Activated CD8-positive, alpha-beta T cell treated with anti-CD3 and anti-CD28 coated beads for 36 hours (primary cell): ENCODE measurements at regions of chr11 and their contacts with region 1.

Region 1: DNA sequence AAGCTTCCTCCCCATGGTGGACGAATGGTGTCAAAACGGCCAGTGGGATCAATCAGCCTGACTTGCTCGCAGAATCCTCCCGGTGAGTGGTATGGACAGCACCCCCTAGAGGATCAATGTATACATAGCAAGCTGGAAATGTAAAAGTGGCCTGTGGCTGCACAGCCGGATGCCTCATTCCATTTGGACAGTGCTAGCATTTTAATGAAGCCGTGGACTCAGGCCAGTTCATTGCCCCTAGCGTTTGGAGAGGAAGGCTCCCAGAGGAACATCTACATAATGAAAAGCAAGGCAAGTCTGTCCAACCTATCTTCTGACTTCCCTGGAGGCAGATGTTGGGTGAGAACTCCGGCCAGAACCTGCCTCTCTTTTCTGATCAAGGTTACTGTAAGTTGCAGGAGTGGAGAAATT is 942.3 kb downstream of the NTM start:
- DNase-seq: peak; percentile 4
- ATAC-seq: peak; percentile 37
- H3K4me3 Mint-ChIP-seq: no peak overlapping the region
- H3K27ac Mint-ChIP-seq: no peak overlapping the region
- H3K4me1 Mint-ChIP-seq: no peaks in the 10 kb centered on the region
- H3K27me3 Mint-ChIP-seq: no peaks in the 10 kb centered on the region
- CTCF ChIP-seq: peak; percentile 20

Region 2: DNA sequence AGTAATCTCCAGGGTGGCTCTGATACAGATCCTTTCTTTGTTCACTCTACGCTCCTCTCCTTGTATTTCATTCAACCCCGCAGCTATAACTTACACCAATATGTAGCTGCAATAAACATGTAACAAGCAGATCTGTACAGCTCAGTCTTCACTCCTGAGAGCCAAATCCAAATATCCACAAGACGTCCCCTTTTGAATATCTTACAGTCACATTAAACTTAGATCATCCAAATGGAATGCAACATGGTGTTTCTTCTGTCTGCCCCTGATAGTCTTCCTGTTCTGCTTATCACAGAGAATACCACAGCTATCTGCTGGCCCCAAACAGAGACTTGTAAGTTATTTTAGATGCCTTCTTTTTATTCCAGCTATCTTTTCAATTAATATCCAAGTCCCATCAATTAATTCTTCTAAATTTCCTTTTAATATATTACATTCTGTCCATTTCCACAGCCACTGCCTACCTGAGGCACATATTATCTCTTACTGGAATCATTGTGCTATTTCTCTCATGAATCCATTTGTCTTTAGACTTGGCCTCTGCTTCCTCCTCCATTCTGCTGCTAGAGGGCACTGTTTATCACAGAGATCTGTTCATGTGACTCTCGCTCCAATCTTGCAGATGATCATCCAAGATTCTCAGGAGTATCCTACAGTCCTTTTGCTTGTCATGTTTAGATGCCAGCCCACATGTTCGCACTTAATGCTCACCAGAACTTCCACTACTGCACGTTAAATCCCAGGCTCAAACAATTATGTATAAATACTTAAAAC is 33.7 kb before region 1 on chr11:
- CTCF ChIA-PET with region 1: interaction called, 11 read pairs
- POLR2A ChIA-PET with region 1: no interaction called
- intact Hi-C with region 1: no loop called
- DNase-seq: no peak
- ATAC-seq: no peak
- H3K4me3 Mint-ChIP-seq: no peak overlapping the region
- H3K27ac Mint-ChIP-seq: no peak overlapping the region
- H3K4me1 Mint-ChIP-seq: no peaks in the 10 kb centered on the region
- H3K27me3 Mint-ChIP-seq: no peaks in the 10 kb centered on the region
- CTCF ChIP-seq: no peak

Region 3: GRCh38 chr11:132301900-132302299 is 10.8 kb before region 1 on chr11:
- CTCF ChIA-PET with region 1: interaction called, 19 read pairs
- POLR2A ChIA-PET with region 1: no interaction called
- intact Hi-C with region 1: no loop called
- DNase-seq: no peak
- ATAC-seq: no peak
- H3K4me3 Mint-ChIP-seq: no peak overlapping the region
- H3K27ac Mint-ChIP-seq: no peak overlapping the region
- H3K4me1 Mint-ChIP-seq: no peaks in the 10 kb centered on the region
- H3K27me3 Mint-ChIP-seq: no peaks in the 10 kb centered on the region
- CTCF ChIP-seq: no peak

Region 4: DNA sequence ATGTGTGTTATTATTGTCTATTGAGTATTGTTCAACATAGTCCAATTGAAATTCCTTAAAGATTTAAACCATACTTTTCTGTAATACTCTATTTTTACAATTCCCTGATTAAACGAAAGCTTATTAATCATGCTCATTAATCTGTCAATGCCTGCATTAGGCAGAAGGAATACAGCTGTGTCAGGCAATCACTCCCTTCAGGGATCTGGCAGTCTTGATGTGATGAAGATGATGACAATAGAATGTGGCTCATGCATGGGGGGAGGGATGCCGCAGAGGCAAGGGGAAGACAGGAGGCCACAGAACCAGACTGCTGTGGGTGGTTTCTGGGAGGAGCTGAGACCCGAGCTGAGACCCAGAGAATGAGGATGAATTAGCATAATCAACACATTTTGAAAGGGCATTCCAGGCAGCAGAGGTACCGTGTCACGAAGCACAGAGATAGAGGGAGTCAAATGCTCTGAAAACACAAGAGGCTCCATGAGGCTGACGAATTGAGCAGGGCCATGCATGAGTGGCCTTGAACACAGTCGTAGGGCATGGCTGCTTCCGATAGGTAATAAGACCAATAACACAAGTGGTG is 144.1 kb after region 1 on chr11:
- CTCF ChIA-PET with region 1: no interaction called
- POLR2A ChIA-PET with region 1: no interaction called
- intact Hi-C with region 1: no loop called
- DNase-seq: no peak
- ATAC-seq: no peak
- H3K4me3 Mint-ChIP-seq: no peak overlapping the region
- H3K27ac Mint-ChIP-seq: no peak overlapping the region
- H3K4me1 Mint-ChIP-seq: no peaks in the 10 kb centered on the region
- H3K27me3 Mint-ChIP-seq: peaks cover 3% of the 10 kb centered on the region
- CTCF ChIP-seq: no peak

Region 5: GRCh38 chr11:132540581-132540980 is 227.9 kb after region 1 on chr11:
- CTCF ChIA-PET with region 1: no interaction called
- POLR2A ChIA-PET with region 1: no interaction called
- intact Hi-C with region 1: no loop called
- DNase-seq: no peak
- ATAC-seq: no peak
- H3K4me3 Mint-ChIP-seq: no peak overlapping the region
- H3K27ac Mint-ChIP-seq: no peak overlapping the region
- H3K4me1 Mint-ChIP-seq: no peaks in the 10 kb centered on the region
- H3K27me3 Mint-ChIP-seq: no peaks in the 10 kb centered on the region
- CTCF ChIP-seq: no peak